ENCODE measurements at regions of chr17 and their contacts with region 1.

Region 1: GRCh38 chr17:9512323-9513168 is 63.1 kb downstream of the STX8 start:
- DNase-seq: peak; percentile 75
- H3K4me3 ChIP-seq: no peak overlapping the region
- H3K27ac ChIP-seq: no peak overlapping the region
- H3K4me1 ChIP-seq: peaks cover 10% of the 10 kb centered on the region
- H3K27me3 ChIP-seq: no peaks in the 10 kb centered on the region
- CTCF ChIP-seq: no peak

Region 2: GRCh38 chr17:9402590-9403199 is 109.9 kb before region 1 on chr17:
- CTCF ChIA-PET with region 1: no interaction called
- dilution Hi-C with region 1: no loop called
- in situ Hi-C with region 1: no loop called
- intact Hi-C with region 1: loop called (anchors 10 kb)
- DNase-seq: no peak
- H3K4me3 ChIP-seq: no peak overlapping the region
- H3K27ac ChIP-seq: no peak overlapping the region
- H3K4me1 ChIP-seq: no peaks in the 10 kb centered on the region
- H3K27me3 ChIP-seq: no peaks in the 10 kb centered on the region
- CTCF ChIP-seq: peak; percentile 43 to 51

Region 3: DNA sequence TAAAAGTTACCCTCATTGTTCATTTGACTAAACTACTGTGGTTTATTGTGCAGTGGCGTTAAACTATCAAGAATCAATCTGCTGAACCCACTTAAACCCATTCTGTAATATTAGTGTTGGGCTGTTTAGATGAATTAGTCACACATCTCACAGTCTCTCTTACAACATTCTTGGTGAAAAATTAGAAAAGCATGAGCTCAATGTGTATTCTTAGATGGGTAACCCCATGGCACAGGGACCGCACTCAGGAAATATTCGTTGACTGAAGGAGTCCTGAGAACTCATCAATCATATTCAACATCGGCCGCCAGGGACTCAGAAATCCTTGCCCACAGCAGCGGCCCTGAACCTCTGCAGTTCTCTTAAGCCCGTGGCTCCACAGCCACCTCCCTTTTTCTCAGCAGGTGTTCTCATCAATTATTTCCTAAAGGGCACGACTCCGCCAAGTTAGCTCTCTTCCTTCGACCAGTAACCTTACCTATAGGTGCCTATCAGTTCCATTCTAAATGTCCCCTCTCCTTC is 92.6 kb before region 1 on chr17:
- CTCF ChIA-PET with region 1: no interaction called
- dilution Hi-C with region 1: no loop called
- in situ Hi-C with region 1: no loop called
- intact Hi-C with region 1: no loop called
- DNase-seq: no peak
- H3K4me3 ChIP-seq: no peak overlapping the region
- H3K27ac ChIP-seq: no peak overlapping the region
- H3K4me1 ChIP-seq: no peaks in the 10 kb centered on the region
- H3K27me3 ChIP-seq: no peaks in the 10 kb centered on the region
- CTCF ChIP-seq: no peak